ENCODE measurements at regions of chr12 and their contacts with region 1.

Region 1: DNA sequence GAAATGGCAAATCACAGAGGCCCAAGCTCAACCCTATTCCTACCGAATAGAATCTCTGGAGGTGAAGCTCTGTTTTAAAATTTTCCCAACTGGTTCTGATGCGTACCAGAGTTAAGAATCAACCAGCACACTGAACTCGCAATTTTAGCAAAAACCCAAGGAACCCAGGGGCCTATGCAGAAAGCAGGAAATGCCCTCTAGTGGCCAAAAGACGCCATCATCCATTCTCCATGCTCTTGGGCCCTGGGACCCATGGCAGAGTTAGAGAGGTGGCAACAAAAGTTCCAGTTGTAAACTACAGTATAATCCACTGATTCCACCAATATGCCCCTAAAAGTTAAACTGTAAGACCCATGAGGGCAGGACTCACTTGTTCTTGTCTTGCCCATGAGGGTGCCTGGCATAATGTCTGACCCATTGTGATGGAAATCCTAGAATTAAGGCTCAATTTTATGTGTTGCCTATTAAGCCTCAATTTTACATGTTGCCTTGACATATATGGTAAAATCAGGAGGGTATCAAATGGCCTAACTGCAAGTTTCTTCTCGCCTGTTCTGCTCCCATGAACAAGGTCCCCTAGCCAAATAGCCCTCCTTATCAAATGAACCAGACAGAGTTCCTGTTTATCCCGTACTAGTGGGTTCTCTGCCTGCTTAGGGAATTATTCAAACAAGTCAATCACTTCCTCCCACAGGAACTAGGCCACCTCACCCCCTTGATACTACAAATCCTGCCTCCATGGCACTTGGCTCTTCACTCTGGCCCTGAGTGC is 137.5 kb upstream of the CPM start:
- DNase-seq: no peak
- H3K4me3 ChIP-seq: no peak overlapping the region
- H3K27ac ChIP-seq: no peak overlapping the region
- H3K4me1 ChIP-seq: peaks cover 0 to 8% (median 0%) of the 10 kb centered on the region in 3 donors
- H3K27me3 ChIP-seq: no peaks in the 10 kb centered on the region
- CTCF ChIP-seq: peak; percentile 62 to 86 (median 84)
- POLR2A ChIP-seq: no peak

Region 2: GRCh38 chr12:68856510-68856909 is 214.0 kb before region 1 on chr12:
- intact Hi-C with region 1: loop called (anchors 10 kb)
- DNase-seq: no peak
- H3K4me3 ChIP-seq: no peak overlapping the region
- H3K27ac ChIP-seq: no peak overlapping the region
- H3K4me1 ChIP-seq: no peaks in the 10 kb centered on the region
- H3K27me3 ChIP-seq: no peaks in the 10 kb centered on the region
- CTCF ChIP-seq: no peak
- POLR2A ChIP-seq: no peak

Region 3: DNA sequence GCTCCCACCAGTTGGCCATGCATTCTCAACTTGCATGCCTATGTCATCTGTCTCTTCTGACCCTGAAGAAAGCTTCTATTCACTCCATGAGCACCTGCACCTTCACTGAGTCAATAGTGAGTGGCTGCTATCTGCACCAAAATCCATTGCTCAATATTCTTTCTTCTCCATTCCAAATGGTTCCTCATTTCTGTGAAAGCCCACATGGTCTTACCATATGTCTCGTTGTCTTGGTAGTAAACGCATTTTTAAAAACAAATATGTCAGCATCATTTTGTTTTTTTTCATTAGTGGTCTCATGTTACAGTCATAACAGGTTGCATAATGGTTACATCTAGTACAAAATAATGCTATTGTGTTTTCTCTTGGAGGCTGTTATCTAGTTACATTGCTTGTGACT is 30.6 kb before region 1 on chr12:
- intact Hi-C with region 1: no loop called
- DNase-seq: no peak
- H3K4me3 ChIP-seq: no peak overlapping the region
- H3K27ac ChIP-seq: no peak overlapping the region
- H3K4me1 ChIP-seq: peaks cover 0 to 2% (median 0%) of the 10 kb centered on the region in 3 donors
- H3K27me3 ChIP-seq: no peaks in the 10 kb centered on the region
- CTCF ChIP-seq: no peak
- POLR2A ChIP-seq: no peak